ENCODE measurements at regions of chr17 and their contacts with region 1.

Region 1: GRCh38 chr17:43316522-43317142 is 82.2 kb upstream of the ARL4D start:
- DNase-seq: no peak
- ATAC-seq: no peak
- H3K4me3 ChIP-seq: no peak overlapping the region; a peak in 1 of 6 replicates
- H3K27ac ChIP-seq: no peak overlapping the region
- H3K4me1 ChIP-seq: peaks cover 20% of the 10 kb centered on the region
- H3K27me3 ChIP-seq: 0 out of 5 replicates have a peak, but pooled peaks cover 0 to 2% of the 10 kb centered on the region in 2 experiments
- CTCF ChIP-seq: no peak
- EP300 ChIP-seq: no peak
- POLR2A ChIP-seq: no peak
- RAD21 ChIP-seq: no peak

Region 2: DNA sequence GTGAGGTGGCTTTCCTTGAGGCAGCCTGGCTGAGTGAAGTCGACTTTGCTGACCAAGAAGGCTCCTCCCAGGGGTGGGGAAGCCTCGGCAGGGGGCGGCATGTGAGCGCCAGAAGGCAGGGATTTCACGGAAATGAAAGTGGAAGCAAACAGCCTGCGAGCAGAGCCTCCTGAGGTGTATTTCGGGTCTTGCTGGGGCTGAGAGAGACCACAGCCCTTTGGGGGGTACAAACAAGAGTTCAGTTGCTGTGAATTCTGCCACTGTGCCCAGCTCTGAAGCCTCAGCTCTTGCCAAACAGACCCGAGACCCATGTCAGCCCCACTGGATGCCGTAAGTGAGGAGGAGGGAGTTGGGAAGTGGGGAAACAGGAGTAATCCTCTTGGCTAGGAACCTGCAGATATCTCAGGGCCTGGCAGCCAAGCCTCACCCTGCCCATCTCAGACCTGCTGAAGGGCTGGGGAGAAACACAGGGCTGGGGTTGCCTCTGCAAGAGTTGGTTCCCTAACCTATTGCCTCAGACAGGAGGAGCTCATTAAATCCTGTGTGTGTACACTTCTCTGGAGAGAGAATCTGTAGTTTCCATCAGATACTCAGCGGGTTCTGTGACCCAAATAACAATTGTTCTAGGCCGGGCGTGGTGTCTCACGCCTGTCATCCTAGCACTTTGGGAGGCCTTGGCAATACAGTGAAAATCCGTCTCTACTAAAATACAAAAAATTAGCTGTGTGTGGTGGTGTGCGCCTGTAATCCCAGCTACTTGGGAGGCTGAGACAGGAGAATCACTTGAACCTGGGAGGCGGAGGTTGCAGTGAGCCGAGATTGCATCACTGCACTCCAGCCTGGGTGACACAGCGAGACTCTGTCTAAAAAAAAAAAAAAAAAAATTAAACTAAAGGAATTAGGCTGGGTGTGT is 309.7 kb before region 1 on chr17 and contains the start of gene IFI35:
- CTCF ChIA-PET with region 1: no interaction called
- POLR2A ChIA-PET with region 1: interaction called, 14 read pairs
- in situ Hi-C with region 1: no loop called
- intact Hi-C with region 1: no loop called
- DNase-seq: peak; percentile 83
- ATAC-seq: peak; percentile 78
- H3K4me3 ChIP-seq: peak within 1 kb of the TSS; percentile 71 to 92 (median 88)
- H3K27ac ChIP-seq: peak within 1 kb of the TSS; percentile 92
- H3K4me1 ChIP-seq: peaks cover 81% of the 10 kb centered on the region
- H3K27me3 ChIP-seq: no peaks in the 10 kb centered on the region; a peak in 1 of 5 replicates
- CTCF ChIP-seq: peak; percentile 97
- EP300 ChIP-seq: no peak
- POLR2A ChIP-seq: peak; percentile 75 to 76
- RAD21 ChIP-seq: peak; percentile 88
- total RNA-seq, gene IFI35: 38.1 and 40.2 TPM in 2 replicates

Region 3: DNA sequence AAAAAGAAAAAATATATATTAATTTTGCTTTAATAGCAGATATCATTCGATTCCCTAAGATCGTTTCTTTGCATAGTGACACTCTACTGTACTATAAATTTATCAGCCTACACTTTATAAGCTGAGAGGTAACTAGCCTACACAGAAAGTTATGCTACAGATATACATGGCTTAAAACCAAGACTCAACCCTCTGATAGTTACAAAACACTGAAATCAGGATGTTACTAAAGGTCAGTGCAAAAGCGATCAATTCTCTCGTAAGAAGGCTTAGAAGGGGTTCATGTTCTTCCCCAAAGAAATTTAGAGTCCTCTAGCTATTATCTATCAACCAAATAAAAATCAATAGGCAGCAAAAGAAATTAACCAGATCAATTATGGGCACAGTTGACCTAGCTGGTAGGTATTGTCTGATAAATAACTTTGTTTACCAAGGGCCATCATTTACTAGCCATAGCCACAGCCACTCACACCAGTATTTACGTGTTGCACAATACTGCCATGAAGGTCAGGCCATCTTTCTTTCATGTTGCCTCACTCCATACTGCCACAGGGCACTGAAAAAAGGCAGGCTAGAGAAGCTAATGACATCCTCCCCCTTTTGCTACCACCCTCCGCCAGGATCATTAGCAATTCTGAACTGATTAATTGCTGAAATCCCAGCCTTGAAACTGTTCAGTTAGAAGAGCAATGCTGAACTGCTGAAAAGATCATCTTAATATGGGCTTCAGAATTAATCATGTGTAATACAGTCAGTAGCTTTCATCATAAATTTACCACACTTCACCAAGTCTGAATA is 247.9 kb before region 1 on chr17:
- CTCF ChIA-PET with region 1: no interaction called
- POLR2A ChIA-PET with region 1: interaction called, 14 read pairs
- in situ Hi-C with region 1: no loop called
- intact Hi-C with region 1: no loop called
- DNase-seq: peak; percentile 90
- ATAC-seq: peak; percentile 99
- H3K4me3 ChIP-seq: peak overlapping the region in 2 of 3 experiments; percentile 19 to 21; a peak in 2 of 6 replicates
- H3K27ac ChIP-seq: peak overlapping the region; percentile 79
- H3K4me1 ChIP-seq: peaks cover 22% of the 10 kb centered on the region
- H3K27me3 ChIP-seq: no peaks in the 10 kb centered on the region
- CTCF ChIP-seq: peak; percentile 36
- EP300 ChIP-seq: peak; percentile 86 to 97
- POLR2A ChIP-seq: 0 out of 4 replicates have a peak, but pooled peaks of 1 of the 2 experiments have one; percentile 16
- RAD21 ChIP-seq: 0 out of 2 replicates have a peak, but pooled peaks have one; percentile 24

Region 4: DNA sequence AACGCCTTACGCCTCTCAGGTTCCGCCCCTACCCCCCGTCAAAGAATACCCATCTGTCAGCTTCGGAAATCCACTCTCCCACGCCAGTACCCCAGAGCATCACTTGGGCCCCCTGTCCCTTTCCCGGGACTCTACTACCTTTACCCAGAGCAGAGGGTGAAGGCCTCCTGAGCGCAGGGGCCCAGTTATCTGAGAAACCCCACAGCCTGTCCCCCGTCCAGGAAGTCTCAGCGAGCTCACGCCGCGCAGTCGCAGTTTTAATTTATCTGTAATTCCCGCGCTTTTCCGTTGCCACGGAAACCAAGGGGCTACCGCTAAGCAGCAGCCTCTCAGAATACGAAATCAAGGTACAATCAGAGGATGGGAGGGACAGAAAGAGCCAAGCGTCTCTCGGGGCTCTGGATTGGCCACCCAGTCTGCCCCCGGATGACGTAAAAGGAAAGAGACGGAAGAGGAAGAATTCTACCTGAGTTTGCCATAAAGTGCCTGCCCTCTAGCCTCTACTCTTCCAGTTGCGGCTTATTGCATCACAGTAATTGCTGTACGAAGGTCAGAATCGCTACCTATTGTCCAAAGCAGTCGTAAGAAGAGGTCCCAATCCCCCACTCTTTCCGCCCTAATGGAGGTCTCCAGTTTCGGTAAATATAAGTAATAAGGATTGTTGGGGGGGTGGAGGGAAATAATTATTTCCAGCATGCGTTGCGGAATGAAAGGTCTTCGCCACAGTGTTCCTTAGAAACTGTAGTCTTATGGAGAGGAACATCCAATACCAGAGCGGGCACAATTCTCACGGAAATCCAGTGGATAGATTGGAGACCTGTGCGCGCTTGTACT is 191.3 kb before region 1 on chr17 and contains the start of gene BRCA1:
- CTCF ChIA-PET with region 1: no interaction called
- POLR2A ChIA-PET with region 1: interaction called, 16 read pairs
- in situ Hi-C with region 1: no loop called
- intact Hi-C with region 1: no loop called
- DNase-seq: peak; percentile 100
- ATAC-seq: peak; percentile 91
- H3K4me3 ChIP-seq: peak within 1 kb of the TSS; percentile 87 to 94 (median 91)
- H3K27ac ChIP-seq: peak within 1 kb of the TSS; percentile 95
- H3K4me1 ChIP-seq: peaks cover 53% of the 10 kb centered on the region
- H3K27me3 ChIP-seq: no peaks in the 10 kb centered on the region; a peak in 1 of 5 replicates
- CTCF ChIP-seq: peak; percentile 23; the same call in 1 of the 2 replicates
- EP300 ChIP-seq: peak; percentile 45 to 73; a peak in 2 of 4 replicates
- POLR2A ChIP-seq: peak; percentile 76 to 97
- RAD21 ChIP-seq: peak; percentile 55; the same call in 1 of the 2 replicates
- total RNA-seq, gene BRCA1: 37.5 and 56.0 TPM in 2 replicates

Region 5: GRCh38 chr17:43170766-43171585 is 145.7 kb before region 1 on chr17 and contains the start of gene NBR1:
- CTCF ChIA-PET with region 1: no interaction called
- POLR2A ChIA-PET with region 1: interaction called, 41 read pairs
- in situ Hi-C with region 1: no loop called
- intact Hi-C with region 1: no loop called
- DNase-seq: peak; percentile 99
- ATAC-seq: peak; percentile 90
- H3K4me3 ChIP-seq: peak within 1 kb of the TSS; percentile 62 to 94 (median 75)
- H3K27ac ChIP-seq: peak within 1 kb of the TSS; percentile 90
- H3K4me1 ChIP-seq: peaks cover 69% of the 10 kb centered on the region
- H3K27me3 ChIP-seq: no peaks in the 10 kb centered on the region; a peak in 1 of 5 replicates
- CTCF ChIP-seq: peak; percentile 79
- EP300 ChIP-seq: peak in 1 of 2 experiments; percentile 43; a peak in 2 of 4 replicates
- POLR2A ChIP-seq: peak; percentile 76 to 89
- RAD21 ChIP-seq: peak; percentile 68
- total RNA-seq, gene NBR1: 51.7 and 79.0 TPM in 2 replicates

Region 6: DNA sequence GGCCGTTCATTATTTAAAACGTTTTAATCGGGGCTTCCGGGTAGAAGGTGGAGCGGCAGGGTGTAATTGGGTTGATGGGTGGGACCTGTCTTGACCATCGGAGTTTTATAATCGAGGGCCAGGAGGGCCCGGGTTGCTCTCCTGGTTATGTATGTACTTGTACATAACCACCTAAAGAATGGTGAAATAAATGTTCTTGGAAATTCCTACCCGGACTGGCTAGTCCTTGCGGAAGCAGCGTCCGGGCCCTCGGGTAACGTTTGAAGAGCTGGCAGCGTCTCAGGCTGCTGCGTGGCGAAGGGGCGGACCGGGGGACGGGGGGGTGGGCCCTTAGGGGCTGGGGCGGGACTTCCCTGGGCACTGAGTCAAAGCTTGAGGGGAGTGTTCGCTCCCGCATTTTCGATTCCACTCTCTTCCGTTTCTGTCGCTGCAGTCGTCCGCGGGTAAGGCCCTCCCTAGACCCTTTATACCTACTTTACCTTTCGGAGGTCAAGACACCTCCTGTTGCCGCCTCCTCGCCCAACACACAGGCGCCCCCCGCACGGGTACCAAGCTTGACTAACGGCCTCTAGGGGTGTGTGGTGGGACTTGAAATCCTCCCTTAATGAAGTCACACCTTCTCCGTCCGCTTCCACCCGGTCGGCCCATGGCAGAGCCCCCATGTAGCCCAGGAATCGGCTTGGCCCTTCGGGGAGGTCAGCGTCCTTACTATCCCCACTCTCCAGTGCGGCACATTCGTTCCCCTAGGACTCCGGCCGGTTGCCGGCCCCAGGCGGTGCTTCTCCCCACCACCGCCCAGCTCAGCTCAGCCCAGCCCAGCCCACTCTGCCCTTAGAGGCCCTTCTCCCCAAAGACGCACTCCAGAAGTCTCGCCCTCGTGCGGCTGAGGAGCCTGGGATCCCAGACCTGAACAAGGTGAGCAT is 104.9 kb before region 1 on chr17 and contains the start of gene TMEM106A:
- CTCF ChIA-PET with region 1: no interaction called
- POLR2A ChIA-PET with region 1: interaction called, 177 read pairs
- in situ Hi-C with region 1: no loop called
- intact Hi-C with region 1: no loop called
- DNase-seq: peak; percentile 75
- ATAC-seq: peak; percentile 81
- H3K4me3 ChIP-seq: peak within 1 kb of the TSS; percentile 77 to 98 (median 77)
- H3K27ac ChIP-seq: peak within 1 kb of the TSS; percentile 80
- H3K4me1 ChIP-seq: peaks cover 62% of the 10 kb centered on the region
- H3K27me3 ChIP-seq: no peaks in the 10 kb centered on the region; a peak in 1 of 5 replicates
- CTCF ChIP-seq: peak; percentile 48
- EP300 ChIP-seq: no peak
- POLR2A ChIP-seq: peak; percentile 82 to 97
- RAD21 ChIP-seq: peak; percentile 43
- total RNA-seq, gene TMEM106A: 7.3 and 16.9 TPM in 2 replicates

Region 7: GRCh38 chr17:43224146-43224695 is 92.4 kb before region 1 on chr17:
- CTCF ChIA-PET with region 1: no interaction called
- POLR2A ChIA-PET with region 1: interaction called, 177 read pairs
- in situ Hi-C with region 1: no loop called
- intact Hi-C with region 1: no loop called
- DNase-seq: no peak
- ATAC-seq: peak; percentile 12
- H3K4me3 ChIP-seq: no peak overlapping the region
- H3K27ac ChIP-seq: peak overlapping the region; percentile 12
- H3K4me1 ChIP-seq: peaks cover 14% of the 10 kb centered on the region
- H3K27me3 ChIP-seq: no peaks in the 10 kb centered on the region
- CTCF ChIP-seq: no peak
- EP300 ChIP-seq: no peak
- POLR2A ChIP-seq: no peak
- RAD21 ChIP-seq: no peak

Measured in HepG2 (cell line).